ENCODE measurements at regions of chr13 and their contacts with region 1.

Region 1: GRCh38 chr13:74133657-74134201 is 475 bp downstream of the KLF12 start:
- DNase-seq: peak; percentile 95
- ATAC-seq: peak; percentile 67
- H3K4me3 Mint-ChIP-seq: no peak overlapping the region
- H3K27ac Mint-ChIP-seq: peak overlapping the region; percentile 100
- H3K4me1 Mint-ChIP-seq: peaks cover 33% of the 10 kb centered on the region
- H3K27me3 Mint-ChIP-seq: peaks cover 3% of the 10 kb centered on the region

Region 2: DNA sequence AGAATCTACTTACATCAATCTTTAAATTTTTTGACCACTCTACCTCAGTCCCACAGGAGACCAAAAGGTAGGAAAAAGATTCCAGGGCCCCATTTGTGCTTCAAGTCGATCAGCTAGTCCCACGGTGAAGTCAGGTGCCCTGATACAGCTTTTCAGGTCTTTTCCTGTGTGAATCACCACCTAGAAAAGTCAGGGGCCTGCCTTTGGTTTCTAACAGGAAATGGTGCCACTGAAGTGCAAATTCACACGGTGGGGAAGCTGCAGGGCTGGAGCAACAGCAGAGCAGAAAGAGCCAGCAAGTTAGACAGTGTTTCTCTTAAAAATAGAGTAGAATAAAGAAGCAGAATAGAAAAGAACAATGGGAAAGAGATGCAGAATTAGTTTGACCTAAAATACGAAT is 107.0 kb before region 1 on chr13:
- CTCF ChIA-PET with region 1: interaction called, 3 read pairs
- POLR2A ChIA-PET with region 1: interaction called, 14 read pairs
- DNase-seq: peak; percentile 81
- ATAC-seq: peak; percentile 98
- H3K4me3 Mint-ChIP-seq: peak overlapping the region; percentile 71
- H3K27ac Mint-ChIP-seq: peak overlapping the region; percentile 91
- H3K4me1 Mint-ChIP-seq: peaks cover 43% of the 10 kb centered on the region
- H3K27me3 Mint-ChIP-seq: no peaks in the 10 kb centered on the region

Region 3: DNA sequence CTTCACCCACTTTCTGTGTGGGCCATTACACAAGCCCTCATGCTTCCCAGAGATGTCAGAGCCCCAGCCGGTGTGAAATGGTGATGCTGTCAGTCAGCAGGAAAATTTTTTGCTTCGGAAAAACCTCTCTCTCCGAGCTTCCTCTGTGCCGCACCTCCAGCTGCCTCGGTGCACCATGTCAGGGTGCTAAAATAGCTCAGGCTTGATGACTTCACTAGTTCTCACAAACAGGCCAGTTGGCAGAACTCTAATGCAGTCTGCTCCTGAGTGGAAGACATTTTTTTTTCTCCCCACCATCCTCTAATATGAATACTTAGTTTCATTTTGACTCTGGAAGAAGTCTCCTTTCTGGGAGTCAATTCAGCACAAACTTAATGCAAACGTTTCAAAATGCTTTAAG is 70.8 kb before region 1 on chr13:
- CTCF ChIA-PET with region 1: interaction called, 3 read pairs
- POLR2A ChIA-PET with region 1: interaction called, 18 read pairs
- DNase-seq: peak; percentile 33
- ATAC-seq: peak; percentile 50
- H3K4me3 Mint-ChIP-seq: peak overlapping the region; percentile 65
- H3K27ac Mint-ChIP-seq: peak overlapping the region; percentile 90
- H3K4me1 Mint-ChIP-seq: peaks cover 81% of the 10 kb centered on the region
- H3K27me3 Mint-ChIP-seq: no peaks in the 10 kb centered on the region

Region 4: GRCh38 chr13:74153316-74153715 is 19.6 kb after region 1 on chr13:
- CTCF ChIA-PET with region 1: interaction called, 11 read pairs
- POLR2A ChIA-PET with region 1: interaction called, 3 read pairs
- DNase-seq: no peak
- ATAC-seq: no peak
- H3K4me3 Mint-ChIP-seq: no peak overlapping the region
- H3K27ac Mint-ChIP-seq: no peak overlapping the region
- H3K4me1 Mint-ChIP-seq: no peaks in the 10 kb centered on the region
- H3K27me3 Mint-ChIP-seq: peaks cover 2% of the 10 kb centered on the region

Region 5: DNA sequence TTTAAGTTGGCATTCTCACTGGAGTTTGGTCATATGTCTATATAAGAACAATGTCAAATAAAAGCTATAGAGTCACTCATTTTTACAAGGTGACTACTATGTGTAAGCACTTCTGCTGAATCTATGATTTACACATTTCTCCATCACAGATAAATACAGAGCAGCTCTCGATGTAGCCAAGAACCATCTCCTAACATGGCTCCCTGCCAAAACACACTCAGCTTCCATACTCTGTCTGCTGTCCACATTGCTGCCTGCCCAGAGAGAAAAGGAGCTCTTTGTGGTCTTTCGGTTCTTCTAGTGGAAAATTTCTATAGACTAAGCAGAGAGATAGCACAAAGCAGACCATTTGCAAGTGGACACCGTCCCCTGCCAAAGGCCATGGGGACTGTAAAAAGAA is 191.4 kb after region 1 on chr13:
- CTCF ChIA-PET with region 1: no interaction called
- POLR2A ChIA-PET with region 1: no interaction called
- DNase-seq: no peak
- ATAC-seq: no peak
- H3K4me3 Mint-ChIP-seq: no peak overlapping the region
- H3K27ac Mint-ChIP-seq: no peak overlapping the region
- H3K4me1 Mint-ChIP-seq: no peaks in the 10 kb centered on the region
- H3K27me3 Mint-ChIP-seq: no peaks in the 10 kb centered on the region

Measured in activated CD8-positive, alpha-beta T cell treated with anti-CD3 and anti-CD28 coated beads, Interleukin-2, amount 10 ng/mL, durations not matched to agents 7 days and 5 days (primary cell).